ENCODE measurements at regions of chr3 and their contacts with region 1.

Region 1: GRCh38 chr3:11803977-11804892 is 42.5 kb downstream of the TAMM41 start:
- DNase-seq: peak; percentile 27 to 32
- ATAC-seq: peak; percentile 87

Region 2: DNA sequence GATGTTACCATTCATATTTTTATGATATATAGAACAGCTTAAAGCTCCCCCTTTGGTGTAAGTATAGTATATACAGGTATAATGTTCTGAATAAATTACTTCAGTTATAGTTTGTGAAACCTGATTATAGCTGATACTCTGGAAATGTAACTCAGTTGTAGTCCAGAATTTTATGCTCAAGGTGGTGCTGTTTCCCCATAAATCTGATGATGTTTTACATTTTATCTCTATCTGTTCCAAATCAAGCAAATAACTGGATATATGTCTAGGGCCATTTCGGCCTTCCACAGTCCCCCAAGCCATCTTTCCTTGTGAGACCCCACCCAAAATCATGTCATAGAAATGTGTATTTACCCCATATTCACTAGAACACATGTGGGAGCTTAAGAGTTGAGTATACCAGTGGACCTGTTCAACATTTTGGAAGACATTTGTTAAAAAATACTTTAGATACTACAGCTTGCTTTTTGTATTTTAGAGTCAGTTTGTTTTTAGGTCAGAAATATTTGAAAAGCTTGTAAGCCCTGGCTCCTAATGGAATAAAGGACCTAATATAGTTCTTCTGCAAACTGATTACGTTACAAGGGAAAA is 424.9 kb before region 1 on chr3:
- intact Hi-C with region 1: loop called in 1 of 2 experiments (anchors 5 kb)
- DNase-seq: no peak
- ATAC-seq: peak; percentile 80

Region 3: GRCh38 chr3:11662402-11662990 is 141.7 kb before region 1 on chr3:
- intact Hi-C with region 1: loop called in 1 of 2 experiments (anchors 10 kb)
- DNase-seq: no peak
- ATAC-seq: no peak

Region 4: GRCh38 chr3:11928381-11928780 is 124.1 kb after region 1 on chr3:
- intact Hi-C with region 1: no loop called
- DNase-seq: no peak
- ATAC-seq: no peak

Region 5: GRCh38 chr3:12318758-12319621 is 514.8 kb after region 1 on chr3:
- intact Hi-C with region 1: no loop called
- DNase-seq: no peak
- ATAC-seq: no peak

Measured in left colon (tissue), 2 donors.